ENCODE measurements at regions of chr15 and their contacts with region 1.

Region 1: DNA sequence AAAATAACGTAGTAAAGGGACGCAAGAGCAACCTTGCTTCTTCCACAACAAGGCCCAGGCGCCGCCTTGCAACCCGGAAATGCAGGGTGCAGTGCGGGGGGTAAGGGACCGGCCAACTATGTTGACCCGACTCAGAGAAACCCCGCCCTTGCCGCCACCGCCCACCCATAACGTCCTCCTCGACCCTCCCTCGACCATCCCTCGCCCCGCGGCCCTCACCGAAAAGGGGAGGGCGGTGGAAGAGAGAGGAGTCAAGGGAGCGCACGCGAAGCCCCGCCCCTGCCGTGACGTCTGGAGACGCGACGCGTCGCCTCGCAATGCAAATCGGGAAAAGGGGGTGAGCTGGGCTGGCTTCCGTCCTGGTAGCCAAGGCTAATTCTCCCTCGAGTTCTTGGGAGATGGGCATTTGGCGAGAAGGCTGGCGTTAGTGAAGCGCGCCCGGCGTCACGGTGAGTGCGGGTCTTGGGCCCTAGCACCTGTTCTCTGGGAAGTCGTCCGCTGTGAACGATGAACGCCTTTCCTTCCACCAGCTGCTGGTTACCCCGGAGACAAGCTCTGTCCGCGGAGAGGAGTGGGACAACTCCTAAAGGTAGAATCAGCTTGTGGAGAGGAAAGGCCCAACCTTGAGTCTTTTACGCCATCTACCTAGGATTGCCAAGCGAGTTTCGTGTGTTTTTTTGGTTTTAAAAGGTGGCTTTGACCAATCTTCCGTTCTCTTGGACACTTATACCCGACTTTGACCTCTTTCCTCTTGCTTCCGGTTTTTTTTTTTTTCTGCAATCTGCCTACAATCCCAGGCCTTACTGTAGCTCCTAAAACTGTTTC is at the start of gene USP8:
- DNase-seq: peak; percentile 96
- H3K4me3 ChIP-seq: peak within 1 kb of the TSS; percentile 61 to 97 (median 84)
- H3K27ac ChIP-seq: peak within 1 kb of the TSS; percentile 90 to 98 (median 96)
- H3K4me1 ChIP-seq: peaks cover 8 to 30% (median 19%) of the 10 kb centered on the region in 4 donors
- H3K27me3 ChIP-seq: no peaks in the 10 kb centered on the region
- CTCF ChIP-seq: no peak
- EP300 ChIP-seq: peak; percentile 12
- POLR2A ChIP-seq: peak; percentile 95
- total RNA-seq, gene USP8: 17.9 to 102 (median 68.9) TPM

Region 2: DNA sequence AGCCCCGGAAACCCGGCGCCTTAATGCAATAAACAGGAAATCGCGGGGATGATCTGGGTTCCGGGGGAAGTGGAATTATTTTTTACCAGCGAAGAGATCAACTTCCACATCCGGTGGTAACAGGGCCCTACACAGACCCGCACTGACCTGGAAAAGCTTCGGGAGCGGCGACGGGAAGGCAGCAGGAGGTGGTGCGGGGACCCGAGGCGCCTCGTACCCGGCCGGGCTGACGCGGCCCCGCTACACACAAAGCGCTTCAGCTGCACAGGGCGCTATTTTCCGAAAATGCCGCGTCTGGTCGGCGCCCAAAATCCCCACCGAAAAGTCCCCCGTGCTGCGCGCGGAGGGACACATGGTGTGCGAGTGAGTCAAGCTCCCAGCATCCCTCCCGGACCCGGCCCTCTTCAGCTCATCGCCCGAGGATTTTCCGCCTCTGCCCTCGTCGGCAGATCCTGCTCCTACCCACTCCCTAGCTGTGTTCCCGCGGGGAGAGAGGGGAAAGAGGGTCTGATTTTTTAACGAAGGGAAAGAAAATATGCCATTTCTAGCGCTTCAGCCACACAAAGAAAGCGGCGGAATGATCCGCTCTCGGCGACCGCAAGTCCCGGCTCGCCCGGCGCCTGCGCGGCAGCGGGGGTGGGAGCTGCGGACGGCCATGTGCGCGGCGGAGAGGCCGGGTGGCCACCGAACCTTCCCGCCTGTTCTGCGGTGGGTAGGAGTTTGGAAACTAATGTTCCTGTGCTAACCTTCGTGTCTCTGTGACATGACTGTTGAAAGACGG is 69.2 kb before region 1 on chr15 and contains the start of gene GABPB1:
- in situ Hi-C with region 1: no loop called
- intact Hi-C with region 1: loop called (anchors 2 kb)
- DNase-seq: peak; percentile 89
- H3K4me3 ChIP-seq: peak within 1 kb of the TSS; percentile 78 to 93 (median 84)
- H3K27ac ChIP-seq: peak within 1 kb of the TSS; percentile 98 to 99 (median 98)
- H3K4me1 ChIP-seq: peaks cover 12 to 54% (median 38%) of the 10 kb centered on the region in 4 donors
- H3K27me3 ChIP-seq: no peaks in the 10 kb centered on the region
- CTCF ChIP-seq: no peak
- EP300 ChIP-seq: no peak
- POLR2A ChIP-seq: peak; percentile 84
- total RNA-seq, gene GABPB1: 2.2 to 21.4 (median 13.1) TPM